Naive thymus-derived CD8-positive, alpha-beta T cell (primary cell): ENCODE measurements at regions of chr3 and their contacts with region 1.

Region 1: DNA sequence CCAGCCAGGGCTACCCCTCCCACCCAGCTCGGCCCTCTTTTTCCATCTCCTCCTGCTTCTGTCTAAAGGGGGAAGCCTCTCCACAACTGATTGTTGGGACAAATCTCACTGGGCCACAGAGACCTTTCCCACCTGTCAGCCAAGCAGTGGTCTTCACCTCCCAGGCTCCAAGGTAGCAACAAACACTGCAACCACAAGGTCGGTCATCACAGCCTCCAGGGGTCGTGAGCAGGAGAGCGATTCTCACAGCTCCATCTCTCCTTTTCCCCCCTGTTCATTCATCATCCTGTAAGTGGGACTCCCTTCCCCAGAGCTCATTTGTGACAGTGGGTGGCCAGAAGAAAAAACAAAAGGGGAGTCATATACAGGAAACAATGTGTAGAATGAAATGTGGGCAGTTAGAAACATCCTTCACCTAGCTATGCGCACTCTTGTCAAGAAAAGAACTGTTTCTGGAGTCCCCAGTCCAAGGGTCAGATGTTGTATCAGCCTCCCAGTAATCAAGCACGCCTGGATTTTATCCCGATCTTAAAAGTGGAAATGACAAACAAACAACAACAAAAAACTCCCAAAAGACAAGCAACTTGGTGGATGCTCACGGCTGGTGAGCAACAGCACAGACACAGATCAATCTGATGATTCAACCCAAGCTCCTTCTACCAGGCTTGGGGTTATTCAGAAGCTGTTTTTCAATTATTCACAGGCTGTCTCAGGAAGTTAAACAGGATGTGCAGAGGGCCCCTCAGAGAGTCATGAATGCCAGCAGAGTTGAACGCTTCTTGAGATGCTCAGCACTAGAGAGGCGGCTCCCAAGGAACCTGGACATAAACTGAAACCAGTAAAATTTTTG is 22.4 kb downstream of the LYZL4 start:
- DNase-seq: peak; percentile 11 to 78 (median 48)
- ATAC-seq: peak; percentile 97 to 98
- H3K4me3 Mint-ChIP-seq: peak overlapping the region; percentile 56 to 86 (median 78)
- H3K27ac Mint-ChIP-seq: peak overlapping the region; percentile 93 to 99 (median 96)
- H3K4me1 Mint-ChIP-seq: peaks cover 45 to 51% (median 48%) of the 10 kb centered on the region in 4 donors
- H3K27me3 Mint-ChIP-seq: no peaks in the 10 kb centered on the region

Region 2: GRCh38 chr3:42345811-42346210 is 42.2 kb before region 1 on chr3:
- POLR2A ChIA-PET with region 1: interaction called, 91 read pairs
- DNase-seq: peak in 8 of 10 donors; percentile 2 to 81 (median 46)
- ATAC-seq: peak; percentile 92 to 93
- H3K4me3 Mint-ChIP-seq: peak overlapping the region in 9 of 10 donors; percentile 50 to 83 (median 69)
- H3K27ac Mint-ChIP-seq: peak overlapping the region in 9 of 10 donors; percentile 88 to 99 (median 97)
- H3K4me1 Mint-ChIP-seq: peaks cover 33 to 54% (median 47%) of the 10 kb centered on the region in 4 donors
- H3K27me3 Mint-ChIP-seq: peaks cover 0 to 2% (median 0%) of the 10 kb centered on the region in 5 donors

Region 3: GRCh38 chr3:42443819-42444436 is 55.9 kb after region 1 on chr3:
- POLR2A ChIA-PET with region 1: interaction called, 11 read pairs
- DNase-seq: peak; percentile 64 to 90 (median 75)
- ATAC-seq: peak; percentile 95 to 99
- H3K4me3 Mint-ChIP-seq: no peak overlapping the region
- H3K27ac Mint-ChIP-seq: no peak overlapping the region
- H3K4me1 Mint-ChIP-seq: peaks cover 4 to 7% (median 5%) of the 10 kb centered on the region in 4 donors
- H3K27me3 Mint-ChIP-seq: peaks cover 0 to 5% (median 1%) of the 10 kb centered on the region in 5 donors